HEK293 (cell line): ENCODE measurements at regions of chr17 and their contacts with region 1.

Region 1: GRCh38 chr17:58679263-58680037 is 12.4 kb downstream of the TEX14 start:
- H3K4me3 ChIP-seq: no peak overlapping the region
- H3K27ac ChIP-seq: peak overlapping the region; percentile 68
- H3K4me1 ChIP-seq: peaks cover 4% of the 10 kb centered on the region; the same call in 1 of the 2 replicates
- CTCF ChIP-seq: peak; percentile 86

Region 2: GRCh38 chr17:58476812-58477211 is 202.6 kb before region 1 on chr17:
- CTCF ChIA-PET with region 1: no interaction called
- POLR2A ChIA-PET with region 1: no interaction called
- H3K4me3 ChIP-seq: no peak overlapping the region
- H3K27ac ChIP-seq: no peak overlapping the region
- H3K4me1 ChIP-seq: no peaks in the 10 kb centered on the region
- CTCF ChIP-seq: no peak

Region 3: DNA sequence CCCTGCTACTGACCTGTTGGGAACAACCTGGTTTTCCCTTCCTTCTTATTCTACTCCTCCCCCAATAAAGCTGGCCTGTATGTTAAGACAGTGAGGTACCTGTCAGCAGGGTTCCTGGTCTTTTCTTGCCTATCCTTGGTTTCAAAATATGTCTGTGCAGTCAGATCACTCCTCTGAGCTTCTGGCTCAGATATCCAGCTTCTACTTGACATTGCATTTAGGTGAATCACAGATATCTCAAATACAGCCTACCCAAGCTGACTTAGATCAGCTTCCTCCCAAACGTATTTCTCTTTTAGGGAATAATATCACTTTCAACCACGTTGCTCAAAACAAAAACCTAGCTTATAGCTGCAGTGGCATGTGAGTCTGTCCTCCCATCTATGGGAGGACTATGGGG is 36.3 kb before region 1 on chr17:
- CTCF ChIA-PET with region 1: interaction called, 11 read pairs
- POLR2A ChIA-PET with region 1: no interaction called
- H3K4me3 ChIP-seq: no peak overlapping the region
- H3K27ac ChIP-seq: no peak overlapping the region
- H3K4me1 ChIP-seq: no peaks in the 10 kb centered on the region
- CTCF ChIP-seq: no peak